ENCODE measurements at regions of chr2 and their contacts with region 1.

Region 1: GRCh38 chr2:69436938-69437750 is at the start of gene NFU1:
- H3K4me3 ChIP-seq: peak within 1 kb of the TSS; percentile 75
- H3K27ac ChIP-seq: peak within 1 kb of the TSS; percentile 86
- H3K4me1 ChIP-seq: peaks cover 3% of the 10 kb centered on the region
- CTCF ChIP-seq: peak; percentile 87

Region 2: DNA sequence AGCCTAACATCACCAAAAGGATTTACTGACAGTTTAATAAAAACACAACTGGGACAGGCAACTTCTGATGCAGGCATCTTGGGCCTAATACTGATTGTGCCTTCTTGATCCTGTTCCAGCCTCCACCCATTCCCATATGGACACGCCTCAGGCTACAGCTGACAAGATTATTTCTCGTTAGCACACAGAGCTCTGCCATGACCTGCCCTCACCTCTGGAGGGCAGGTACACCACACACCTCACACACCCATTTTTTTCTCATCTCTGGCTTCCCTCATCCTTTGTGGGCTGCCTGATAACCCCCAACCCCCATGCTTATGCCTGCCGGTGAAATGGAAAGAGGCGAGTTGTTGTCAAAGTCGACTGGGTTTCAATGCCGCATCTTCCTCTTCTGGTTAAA is 277.2 kb before region 1 on chr2:
- CTCF ChIA-PET with region 1: no interaction called
- POLR2A ChIA-PET with region 1: no interaction called
- H3K4me3 ChIP-seq: no peak overlapping the region
- H3K27ac ChIP-seq: no peak overlapping the region
- H3K4me1 ChIP-seq: peaks cover 8% of the 10 kb centered on the region
- CTCF ChIP-seq: peak; percentile 54; the same call in 1 of the 2 replicates

Region 3: GRCh38 chr2:69386789-69387734 is 50.1 kb before region 1 on chr2 and contains the start of gene GFPT1:
- CTCF ChIA-PET with region 1: interaction called, 4 read pairs
- POLR2A ChIA-PET with region 1: interaction called, 12 read pairs
- H3K4me3 ChIP-seq: peak within 1 kb of the TSS; percentile 98
- H3K27ac ChIP-seq: peak within 1 kb of the TSS; percentile 72; the same call in 1 of the 2 replicates
- H3K4me1 ChIP-seq: no peaks in the 10 kb centered on the region
- CTCF ChIP-seq: peak; percentile 21; the same call in 1 of the 2 replicates

Region 4: DNA sequence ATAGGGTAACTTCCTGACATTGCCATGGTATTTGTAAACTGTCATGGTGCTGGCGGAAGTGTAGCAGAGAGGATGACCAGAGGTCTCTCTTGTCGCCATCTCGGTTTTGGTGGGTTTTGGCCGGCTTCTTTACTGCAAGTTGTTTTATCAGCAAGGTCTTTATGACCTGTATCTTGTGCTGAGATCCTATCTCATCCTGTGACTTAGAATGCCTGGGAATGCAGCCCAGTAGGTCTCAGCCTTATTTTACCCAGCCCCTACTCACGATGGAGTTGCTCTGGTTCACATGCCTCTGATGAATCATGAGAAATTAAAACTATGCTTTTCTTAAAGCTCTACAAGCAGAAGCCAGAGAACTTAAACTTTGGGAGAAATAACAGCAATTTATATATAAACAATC is 12.8 kb after region 1 on chr2:
- CTCF ChIA-PET with region 1: interaction called, 14 read pairs
- POLR2A ChIA-PET with region 1: no interaction called
- H3K4me3 ChIP-seq: no peak overlapping the region
- H3K27ac ChIP-seq: no peak overlapping the region
- H3K4me1 ChIP-seq: peaks cover 4% of the 10 kb centered on the region; the same call in 1 of the 2 replicates
- CTCF ChIP-seq: no peak